ENCODE measurements at regions of chr4 and their contacts with region 1.

Region 1: GRCh38 chr4:8391972-8392371 is 48.6 kb downstream of the ACOX3 start:
- DNase-seq: no peak

Region 2: GRCh38 chr4:8320386-8320750 is 71.6 kb before region 1 on chr4:
- intact Hi-C with region 1: loop called in 1 of 2 experiments (anchors 10 kb)
- DNase-seq: no peak

Region 3: GRCh38 chr4:8403173-8403753 is 11.3 kb after region 1 on chr4:
- intact Hi-C with region 1: no loop called
- DNase-seq: peak; percentile 96

Measured in posterior vena cava (tissue), 2 donors.